ENCODE measurements at regions of chr14 and their contacts with region 1.

Region 1: DNA sequence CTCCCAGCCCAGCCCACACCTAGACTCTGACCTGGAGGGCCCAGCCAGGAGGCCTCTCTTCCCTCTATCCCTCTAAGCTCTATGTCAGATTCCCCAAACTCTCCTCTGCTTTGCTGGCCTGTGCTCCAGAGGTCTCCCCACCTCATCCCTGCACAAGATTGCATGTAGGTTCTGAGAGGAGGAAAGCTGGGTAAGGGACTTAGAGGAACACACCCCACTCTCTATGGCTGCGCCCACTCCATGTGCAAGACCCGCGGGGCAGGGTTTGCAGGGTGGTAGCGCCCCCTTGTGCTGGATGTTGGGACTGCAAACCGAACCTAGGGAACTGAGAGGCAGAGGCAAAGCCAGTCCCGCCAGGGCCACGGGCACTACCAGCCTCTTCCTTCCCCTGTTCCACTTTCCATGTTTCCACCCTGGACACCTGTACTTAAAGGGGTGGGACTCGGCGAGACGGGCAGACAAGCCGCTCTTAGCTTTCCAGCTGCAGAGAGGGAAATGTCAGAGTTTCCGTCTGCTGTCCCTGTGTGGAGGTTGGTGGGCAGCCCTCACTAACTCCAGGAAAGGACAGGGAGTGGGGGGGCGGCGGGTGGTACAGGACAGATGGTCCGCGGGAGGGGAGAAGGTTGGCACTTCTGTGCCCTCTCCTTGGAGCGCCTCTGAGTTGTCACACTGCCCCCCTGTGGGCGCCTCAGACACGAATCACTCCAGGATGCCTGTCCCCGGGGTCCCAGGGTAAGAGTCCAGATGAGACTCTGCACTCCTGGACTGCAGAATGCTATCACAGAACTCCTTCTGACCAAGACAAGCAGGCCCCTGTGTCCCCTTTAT is 16.8 kb downstream of the MMP14 start:
- DNase-seq: peak; percentile 97
- H3K4me3 Mint-ChIP-seq: peak overlapping the region; percentile 87
- H3K27ac Mint-ChIP-seq: peak overlapping the region; percentile 78
- H3K4me1 Mint-ChIP-seq: peaks cover 33% of the 10 kb centered on the region
- H3K27me3 Mint-ChIP-seq: peaks cover 10% of the 10 kb centered on the region

Region 2: GRCh38 chr14:21917699-21918436 is 935.3 kb before region 1 on chr14:
- intact Hi-C with region 1: loop called (anchors 10 kb)
- DNase-seq: peak; percentile 90
- H3K4me3 Mint-ChIP-seq: peak overlapping the region; percentile 76
- H3K27ac Mint-ChIP-seq: peak overlapping the region; percentile 74
- H3K4me1 Mint-ChIP-seq: peaks cover 47% of the 10 kb centered on the region
- H3K27me3 Mint-ChIP-seq: no peaks in the 10 kb centered on the region

Region 3: DNA sequence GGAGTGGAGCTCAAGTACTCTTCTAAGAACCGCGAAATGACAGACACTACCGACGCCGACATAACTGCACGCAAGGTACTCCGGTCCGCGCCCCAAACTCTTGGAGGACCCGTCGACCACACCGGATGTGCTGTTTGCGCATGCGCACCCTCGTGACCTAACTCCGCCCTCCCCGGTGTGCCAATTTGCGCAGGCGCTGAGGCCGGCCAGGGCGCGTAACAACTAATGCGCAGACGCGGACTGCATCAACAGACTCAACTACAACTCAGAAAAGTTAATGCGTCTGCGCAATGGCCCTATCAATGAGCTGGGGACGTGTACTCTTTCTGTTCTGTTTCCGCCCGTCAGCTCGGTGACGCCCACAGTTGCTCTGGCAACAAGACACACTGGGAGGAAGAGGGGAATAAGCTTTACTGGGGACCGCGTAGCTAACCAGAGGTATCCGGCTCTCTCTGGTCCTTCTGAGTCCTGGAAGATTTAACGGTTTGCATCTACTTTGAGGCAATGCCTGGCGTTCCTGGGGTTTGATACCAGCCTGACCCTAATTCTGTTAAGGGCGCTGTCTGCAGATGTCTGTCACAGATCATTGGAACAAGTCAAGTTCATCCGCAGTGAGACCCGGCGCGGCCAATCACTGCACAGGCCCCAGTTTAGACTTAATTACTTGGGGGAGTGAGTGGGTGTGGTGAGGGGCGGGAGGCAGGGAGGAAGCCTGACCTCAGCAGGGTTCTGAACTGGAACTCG is 263.9 kb before region 1 on chr14 and contains the start of gene DAD1:
- intact Hi-C with region 1: loop called (anchors 5 kb)
- DNase-seq: peak; percentile 100
- H3K4me3 Mint-ChIP-seq: peak within 1 kb of the TSS; percentile 87
- H3K27ac Mint-ChIP-seq: peak within 1 kb of the TSS; percentile 99
- H3K4me1 Mint-ChIP-seq: peaks cover 49% of the 10 kb centered on the region
- H3K27me3 Mint-ChIP-seq: peaks cover 10% of the 10 kb centered on the region
- total RNA-seq, gene DAD1: 255 and 266 TPM in 2 replicates

Region 4: GRCh38 chr14:22653012-22653621 is 200.0 kb before region 1 on chr14:
- intact Hi-C with region 1: loop called (anchors 2 kb)
- DNase-seq: peak; percentile 85
- H3K4me3 Mint-ChIP-seq: no peak overlapping the region
- H3K27ac Mint-ChIP-seq: no peak overlapping the region
- H3K4me1 Mint-ChIP-seq: no peaks in the 10 kb centered on the region
- H3K27me3 Mint-ChIP-seq: no peaks in the 10 kb centered on the region

Region 5: GRCh38 chr14:22822571-22823098 is 30.5 kb before region 1 on chr14:
- intact Hi-C with region 1: loop called (anchors 1 kb)
- DNase-seq: peak; percentile 90
- H3K4me3 Mint-ChIP-seq: peak overlapping the region; percentile 71
- H3K27ac Mint-ChIP-seq: no peak overlapping the region
- H3K4me1 Mint-ChIP-seq: peaks cover 33% of the 10 kb centered on the region
- H3K27me3 Mint-ChIP-seq: peaks cover 9% of the 10 kb centered on the region

Region 6: DNA sequence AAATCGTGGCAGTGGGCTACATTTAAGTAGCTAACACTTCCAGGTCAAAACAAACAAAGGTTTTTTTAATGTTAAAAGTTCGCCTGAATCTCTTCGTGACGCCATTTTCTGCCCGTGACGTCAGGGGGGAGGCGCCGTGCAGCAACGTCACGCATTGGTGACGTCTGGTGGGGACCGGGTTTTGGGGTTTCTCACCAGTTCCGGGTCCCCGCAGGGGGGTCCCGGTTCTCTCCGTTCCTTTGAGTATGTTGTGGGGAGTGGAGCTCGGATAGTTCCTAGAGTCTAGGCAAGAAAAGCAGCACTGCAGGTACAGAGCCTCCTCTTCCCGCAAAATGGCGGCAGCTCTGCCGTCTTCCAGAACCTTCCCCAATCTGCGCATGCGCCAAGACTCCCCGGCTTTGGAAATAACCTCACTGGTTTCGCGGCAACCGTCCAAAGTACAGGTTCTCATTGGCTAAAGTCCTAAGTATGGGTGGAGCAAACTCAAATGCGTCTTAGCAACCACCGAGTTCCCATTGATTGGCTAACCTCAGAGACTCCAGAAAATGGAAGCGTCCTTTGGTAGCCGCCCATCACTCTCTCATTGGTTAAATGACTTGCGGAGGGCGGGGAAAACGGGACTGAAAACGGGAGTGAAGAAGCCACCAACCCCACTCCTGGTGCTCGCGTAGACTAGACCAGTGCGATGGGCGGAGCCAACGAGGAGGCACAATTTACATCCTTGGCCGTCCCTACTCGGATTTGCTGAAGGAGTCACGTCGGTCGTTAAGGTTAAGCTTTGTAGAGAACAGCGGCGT is 65.8 kb after region 1 on chr14 and contains the start of gene RBM23:
- intact Hi-C with region 1: no loop called
- DNase-seq: peak; percentile 100
- H3K4me3 Mint-ChIP-seq: peak within 1 kb of the TSS; percentile 95
- H3K27ac Mint-ChIP-seq: peak within 1 kb of the TSS; percentile 100
- H3K4me1 Mint-ChIP-seq: peaks cover 27% of the 10 kb centered on the region
- H3K27me3 Mint-ChIP-seq: peaks cover 2% of the 10 kb centered on the region
- total RNA-seq, gene RBM23: 82.7 and 90.2 TPM in 2 replicates

Measured in activated CD4-positive, alpha-beta T cell treated with anti-CD3 and anti-CD28 coated beads, Interleukin-2, amount 10 ng/mL, durations not matched to agents 24 days and 14 days (primary cell).